ENCODE measurements at regions of chr1 and their contacts with region 1.

Region 1: GRCh38 chr1:30718636-30719405 is 4.6 kb downstream of the MATN1 start:
- DNase-seq: peak; percentile 75 to 97 (median 96)
- ATAC-seq: peak; percentile 78
- H3K4me3 ChIP-seq: peak overlapping the region; percentile 88
- H3K4me3 Mint-ChIP-seq: peak overlapping the region; percentile 83 to 96 (median 91)
- H3K27ac ChIP-seq: peak overlapping the region; percentile 100
- H3K27ac Mint-ChIP-seq: peak overlapping the region; percentile 86 to 97 (median 94)
- H3K4me1 ChIP-seq: peaks cover 10 to 37% of the 10 kb centered on the region in 2 donors
- H3K4me1 Mint-ChIP-seq: peaks cover 18 to 49% (median 38%) of the 10 kb centered on the region in 7 donors
- H3K27me3 ChIP-seq: no peaks in the 10 kb centered on the region
- H3K27me3 Mint-ChIP-seq: no peaks in the 10 kb centered on the region

Region 2: GRCh38 chr1:29426810-29427209 is 1292.0 kb before region 1 on chr1:
- CTCF ChIA-PET with region 1: no interaction called
- POLR2A ChIA-PET with region 1: no interaction called
- intact Hi-C with region 1: no loop called
- DNase-seq: no peak
- ATAC-seq: no peak
- H3K4me3 ChIP-seq: no peak overlapping the region
- H3K4me3 Mint-ChIP-seq: no peak overlapping the region
- H3K27ac ChIP-seq: no peak overlapping the region
- H3K27ac Mint-ChIP-seq: no peak overlapping the region
- H3K4me1 ChIP-seq: no peaks in the 10 kb centered on the region
- H3K4me1 Mint-ChIP-seq: no peaks in the 10 kb centered on the region
- H3K27me3 ChIP-seq: no peaks in the 10 kb centered on the region
- H3K27me3 Mint-ChIP-seq: peaks cover 18 to 45% (median 27%) of the 10 kb centered on the region in 5 donors

Region 3: GRCh38 chr1:30668024-30668423 is 50.8 kb before region 1 on chr1:
- CTCF ChIA-PET with region 1: no interaction called
- POLR2A ChIA-PET with region 1: no interaction called
- intact Hi-C with region 1: no loop called
- DNase-seq: no peak
- ATAC-seq: no peak
- H3K4me3 ChIP-seq: no peak overlapping the region
- H3K4me3 Mint-ChIP-seq: no peak overlapping the region
- H3K27ac ChIP-seq: no peak overlapping the region
- H3K27ac Mint-ChIP-seq: no peak overlapping the region
- H3K4me1 ChIP-seq: no peaks in the 10 kb centered on the region
- H3K4me1 Mint-ChIP-seq: peaks cover 0 to 4% (median 0%) of the 10 kb centered on the region in 7 donors
- H3K27me3 ChIP-seq: no peaks in the 10 kb centered on the region
- H3K27me3 Mint-ChIP-seq: peaks cover 0 to 21% (median 11%) of the 10 kb centered on the region in 5 donors

Region 4: DNA sequence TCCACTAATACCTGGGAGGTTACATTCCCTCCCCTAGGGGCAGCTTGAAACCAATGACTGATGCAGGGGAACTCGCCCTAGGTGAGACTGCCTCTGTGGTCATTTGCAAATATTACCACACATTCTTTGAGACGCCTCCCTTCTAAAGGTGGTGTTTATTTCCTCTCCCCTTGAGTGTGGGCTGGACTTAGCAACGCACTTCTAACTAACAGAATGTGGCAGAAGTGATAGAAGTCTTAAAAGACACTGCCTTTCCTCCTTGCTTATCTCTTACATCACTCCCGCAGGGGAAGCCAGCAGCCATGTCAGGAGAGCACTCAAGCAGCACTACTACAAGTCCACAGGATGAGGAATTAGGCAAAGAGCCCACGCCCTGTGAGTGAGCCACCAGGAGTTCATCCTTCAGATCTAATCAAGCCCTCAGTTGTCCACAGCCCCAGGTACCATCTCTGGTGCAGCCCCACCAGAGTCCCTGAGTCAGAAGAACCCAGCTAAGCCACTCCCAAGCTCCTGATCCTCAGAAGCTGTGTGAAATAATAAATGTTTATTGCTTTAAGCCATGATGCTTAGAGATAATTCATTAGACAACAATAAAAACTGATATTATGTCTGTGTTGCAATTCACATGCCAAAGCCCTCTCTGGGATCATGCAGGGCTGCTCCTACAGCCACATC is 19.4 kb after region 1 on chr1:
- CTCF ChIA-PET with region 1: interaction called, 52 read pairs
- POLR2A ChIA-PET with region 1: interaction called, 1,281 read pairs
- intact Hi-C with region 1: loop called (anchors 1 kb)
- DNase-seq: no peak
- ATAC-seq: no peak
- H3K4me3 ChIP-seq: no peak overlapping the region
- H3K4me3 Mint-ChIP-seq: peak overlapping the region in 2 of 10 donors; percentile 4 to 38
- H3K27ac ChIP-seq: peak overlapping the region; percentile 57
- H3K27ac Mint-ChIP-seq: peak overlapping the region; percentile 70 to 99 (median 90)
- H3K4me1 ChIP-seq: peaks cover 32 to 39% of the 10 kb centered on the region in 2 donors
- H3K4me1 Mint-ChIP-seq: peaks cover 47 to 60% (median 55%) of the 10 kb centered on the region in 7 donors
- H3K27me3 ChIP-seq: no peaks in the 10 kb centered on the region
- H3K27me3 Mint-ChIP-seq: no peaks in the 10 kb centered on the region

Region 5: GRCh38 chr1:30779294-30780071 is 60.7 kb after region 1 on chr1:
- CTCF ChIA-PET with region 1: interaction called, 149 read pairs
- POLR2A ChIA-PET with region 1: interaction called, 72 read pairs
- intact Hi-C with region 1: loop called (anchors 1 kb)
- DNase-seq: peak; percentile 82 to 98 (median 88)
- ATAC-seq: peak; percentile 85
- H3K4me3 ChIP-seq: no peak overlapping the region
- H3K4me3 Mint-ChIP-seq: peak overlapping the region in 4 of 10 donors; percentile 4 to 64 (median 34)
- H3K27ac ChIP-seq: no peak overlapping the region
- H3K27ac Mint-ChIP-seq: peak overlapping the region in 5 of 9 donors; percentile 13 to 72 (median 54)
- H3K4me1 ChIP-seq: peaks cover 10 to 15% of the 10 kb centered on the region in 2 donors
- H3K4me1 Mint-ChIP-seq: peaks cover 0 to 19% (median 14%) of the 10 kb centered on the region in 7 donors
- H3K27me3 ChIP-seq: no peaks in the 10 kb centered on the region
- H3K27me3 Mint-ChIP-seq: peaks cover 0 to 12% (median 0%) of the 10 kb centered on the region in 5 donors

Region 6: DNA sequence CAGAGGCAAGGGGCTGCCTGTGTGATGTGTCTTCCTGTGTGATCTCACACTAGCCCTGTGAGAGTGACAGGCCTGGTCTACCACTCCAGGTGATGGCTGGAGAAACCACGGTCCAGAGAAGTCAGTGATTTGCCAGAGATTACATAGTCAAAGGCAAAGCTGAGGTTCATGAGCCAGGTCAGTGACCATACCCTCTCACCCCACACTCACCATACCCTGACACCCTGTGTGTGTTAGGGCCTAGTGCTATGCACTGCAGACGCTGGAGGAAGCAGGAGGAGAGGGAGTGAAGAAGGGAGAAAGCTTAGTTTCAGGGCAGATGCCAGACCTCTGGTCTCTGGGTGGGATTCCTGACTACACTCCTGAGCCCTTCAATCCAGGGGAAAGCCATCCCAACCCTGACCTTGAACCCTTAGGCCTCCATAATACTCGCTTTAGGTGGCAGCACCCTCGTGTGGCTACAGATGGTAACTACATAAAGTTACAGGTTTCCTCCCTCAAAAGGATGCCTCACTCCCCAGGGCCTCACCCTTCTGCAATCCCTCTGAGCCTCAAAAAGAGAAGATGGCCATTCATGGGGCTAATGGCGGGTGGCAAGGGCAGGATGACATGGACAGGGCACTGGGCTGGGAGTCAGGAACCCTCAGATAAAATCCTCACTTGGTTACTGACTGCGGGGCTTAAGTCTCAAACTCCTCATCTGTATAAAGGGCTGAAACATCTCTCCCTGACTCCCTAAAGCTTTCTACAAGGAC is 210.5 kb after region 1 on chr1:
- CTCF ChIA-PET with region 1: interaction called, 9 read pairs
- POLR2A ChIA-PET with region 1: interaction called, 3 read pairs
- intact Hi-C with region 1: loop called (anchors 1 to 5 kb)
- DNase-seq: peak in 7 of 9 donors; percentile 24 to 53 (median 41)
- ATAC-seq: peak; percentile 82
- H3K4me3 ChIP-seq: no peak overlapping the region
- H3K4me3 Mint-ChIP-seq: no peak overlapping the region
- H3K27ac ChIP-seq: no peak overlapping the region
- H3K27ac Mint-ChIP-seq: peak overlapping the region in 7 of 9 donors; percentile 20 to 71 (median 48)
- H3K4me1 ChIP-seq: peaks cover 0 to 11% of the 10 kb centered on the region in 2 donors
- H3K4me1 Mint-ChIP-seq: peaks cover 0 to 6% (median 0%) of the 10 kb centered on the region in 7 donors
- H3K27me3 ChIP-seq: no peaks in the 10 kb centered on the region
- H3K27me3 Mint-ChIP-seq: no peaks in the 10 kb centered on the region

Region 7: GRCh38 chr1:31148409-31148808 is 429.6 kb after region 1 on chr1:
- CTCF ChIA-PET with region 1: no interaction called
- POLR2A ChIA-PET with region 1: no interaction called
- intact Hi-C with region 1: no loop called
- DNase-seq: no peak
- ATAC-seq: no peak
- H3K4me3 ChIP-seq: no peak overlapping the region
- H3K4me3 Mint-ChIP-seq: no peak overlapping the region
- H3K27ac ChIP-seq: no peak overlapping the region
- H3K27ac Mint-ChIP-seq: no peak overlapping the region
- H3K4me1 ChIP-seq: no peaks in the 10 kb centered on the region
- H3K4me1 Mint-ChIP-seq: no peaks in the 10 kb centered on the region
- H3K27me3 ChIP-seq: no peaks in the 10 kb centered on the region
- H3K27me3 Mint-ChIP-seq: peaks cover 0 to 2% (median 0%) of the 10 kb centered on the region in 5 donors

Region 8: DNA sequence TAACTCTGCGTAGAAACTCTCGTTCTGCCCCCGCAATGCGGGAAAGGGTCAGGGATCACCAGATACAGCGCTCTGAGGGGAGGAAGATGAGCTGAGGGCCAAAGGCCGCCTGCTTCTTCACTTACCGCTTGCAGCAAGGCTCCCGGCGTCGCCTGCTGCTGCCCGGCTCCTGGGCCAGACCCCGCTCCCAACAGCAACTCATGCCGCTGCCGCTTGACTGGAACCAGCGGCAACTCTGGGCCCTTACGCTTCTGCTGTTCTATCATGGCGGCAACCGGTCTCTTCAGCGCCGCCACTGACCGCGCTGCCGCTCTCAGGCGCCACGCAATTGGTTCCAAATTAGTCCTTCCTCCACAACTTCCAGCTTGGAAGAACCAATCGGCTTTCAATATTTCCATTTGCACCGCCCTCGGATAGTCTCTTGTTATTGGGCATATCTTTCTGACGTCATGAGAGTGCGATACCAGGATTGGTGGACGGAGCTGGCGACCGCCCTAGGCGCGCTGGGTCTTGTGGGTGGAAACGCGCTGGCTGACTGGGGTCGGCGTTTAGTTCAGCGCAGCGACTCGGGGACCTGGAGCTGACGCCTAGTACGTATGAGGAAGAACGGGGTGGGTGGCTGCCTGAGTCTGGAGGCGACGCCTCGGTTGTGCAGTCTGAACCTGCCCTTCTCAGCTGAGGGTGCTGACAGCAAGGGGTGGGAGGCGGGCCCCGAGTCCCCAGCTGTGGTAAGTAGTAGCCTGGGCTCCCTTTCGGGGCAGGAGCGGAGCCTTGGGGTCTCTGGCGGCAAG is 577.9 kb after region 1 on chr1 and contains the starts of genes SNRNP40 and ZCCHC17:
- CTCF ChIA-PET with region 1: no interaction called
- POLR2A ChIA-PET with region 1: interaction called, 4 read pairs
- intact Hi-C with region 1: loop called (anchors 1 kb)
- DNase-seq: peak; percentile 73 to 99 (median 98)
- ATAC-seq: peak; percentile 97
- H3K4me3 ChIP-seq: peak within 1 kb of the TSS; percentile 89
- H3K4me3 Mint-ChIP-seq: no peak within 1 kb of the TSS
- H3K27ac ChIP-seq: peak within 1 kb of the TSS; percentile 92
- H3K27ac Mint-ChIP-seq: peak within 1 kb of the TSS in 1 of 9 donors; percentile 84
- H3K4me1 ChIP-seq: peaks cover 18 to 24% of the 10 kb centered on the region in 2 donors
- H3K4me1 Mint-ChIP-seq: peaks cover 12 to 41% (median 27%) of the 10 kb centered on the region in 7 donors
- H3K27me3 ChIP-seq: no peaks in the 10 kb centered on the region
- H3K27me3 Mint-ChIP-seq: no peaks in the 10 kb centered on the region
- total RNA-seq, gene SNRNP40: 53.5 to 88.5 (median 62.1) TPM
- total RNA-seq, gene ZCCHC17: 10.3 to 23.8 (median 20.1) TPM

Region 9: GRCh38 chr1:32107742-32108661 is 1389.2 kb after region 1 on chr1 and contains the start of gene KPNA6:
- CTCF ChIA-PET with region 1: no interaction called
- POLR2A ChIA-PET with region 1: no interaction called
- intact Hi-C with region 1: loop called in 1 of 2 experiments (anchors 2 kb)
- DNase-seq: peak; percentile 75 to 95 (median 93)
- ATAC-seq: peak; percentile 94
- H3K4me3 ChIP-seq: peak within 1 kb of the TSS; percentile 75
- H3K4me3 Mint-ChIP-seq: peak within 1 kb of the TSS; percentile 95 to 100 (median 99)
- H3K27ac ChIP-seq: peak within 1 kb of the TSS; percentile 94
- H3K27ac Mint-ChIP-seq: peak within 1 kb of the TSS; percentile 93 to 99 (median 98)
- H3K4me1 ChIP-seq: peaks cover 37 to 40% of the 10 kb centered on the region in 2 donors
- H3K4me1 Mint-ChIP-seq: peaks cover 27 to 63% (median 47%) of the 10 kb centered on the region in 7 donors
- H3K27me3 ChIP-seq: no peaks in the 10 kb centered on the region
- H3K27me3 Mint-ChIP-seq: no peaks in the 10 kb centered on the region
- total RNA-seq, gene KPNA6: 47.4 to 63.7 (median 51.6) TPM

Measured in naive thymus-derived CD4-positive, alpha-beta T cell (primary cell).